ENCODE measurements at regions of chr3 and their contacts with region 1.

Region 1: DNA sequence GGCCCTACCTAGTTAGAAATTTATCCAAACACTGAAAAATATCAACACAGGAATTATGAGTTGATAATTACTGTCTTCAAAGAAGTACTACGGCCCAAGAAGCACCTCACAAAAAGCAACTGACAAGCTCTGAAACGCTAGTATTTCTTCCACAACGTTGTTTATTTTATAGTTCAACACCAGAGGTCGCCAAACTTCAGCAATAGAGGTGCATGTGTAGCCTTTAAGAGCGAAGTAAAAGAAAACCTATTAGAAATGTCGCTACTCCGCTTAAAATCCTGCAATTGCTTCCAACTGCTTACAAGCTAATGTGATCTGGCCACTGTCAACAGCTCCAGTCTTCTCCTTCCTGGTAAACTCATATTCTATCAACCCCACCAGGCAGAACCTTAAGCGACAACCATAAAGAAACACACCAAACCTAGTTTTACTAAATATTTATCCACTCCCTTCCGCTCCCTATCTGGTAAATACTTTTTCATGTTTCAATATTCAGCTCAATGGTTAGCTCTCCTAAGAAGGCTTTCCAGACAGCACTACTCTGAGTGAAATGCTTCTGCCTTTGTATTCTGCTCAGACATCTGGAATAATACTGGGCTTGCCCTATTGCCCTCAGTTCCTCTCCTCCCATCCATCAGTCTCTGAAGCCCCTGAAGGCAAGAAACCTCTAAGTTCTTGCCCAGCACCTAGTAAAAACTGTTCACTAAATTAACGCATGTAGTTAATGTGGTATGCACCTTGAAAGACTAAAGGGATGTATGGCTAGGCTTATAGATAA is 110.2 kb downstream of the NR1I2 start:
- DNase-seq: peak; percentile 26
- H3K4me3 Mint-ChIP-seq: no peak overlapping the region
- H3K27ac Mint-ChIP-seq: no peak overlapping the region
- H3K4me1 Mint-ChIP-seq: peaks cover 4% of the 10 kb centered on the region
- H3K27me3 Mint-ChIP-seq: no peaks in the 10 kb centered on the region

Region 2: DNA sequence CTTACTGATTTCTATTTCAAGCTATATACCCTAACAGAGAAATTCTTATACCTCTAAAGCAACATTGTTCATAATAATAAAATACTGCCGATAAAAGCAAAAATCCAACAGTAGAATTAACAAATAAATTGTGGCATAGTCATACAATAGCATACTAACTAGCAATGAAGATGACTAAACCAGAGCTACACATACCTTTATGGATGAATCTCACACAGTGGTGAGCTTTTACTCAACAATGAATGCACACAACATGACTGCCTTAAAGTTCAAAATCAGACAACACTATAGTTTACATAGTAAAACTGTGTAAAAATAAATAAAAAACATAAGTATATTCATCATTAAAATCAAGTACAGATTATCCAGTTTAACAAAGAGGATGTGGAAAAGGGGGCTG is 11.2 kb before region 1 on chr3:
- CTCF ChIA-PET with region 1: interaction called, 12 read pairs
- POLR2A ChIA-PET with region 1: no interaction called
- DNase-seq: no peak
- H3K4me3 Mint-ChIP-seq: no peak overlapping the region
- H3K27ac Mint-ChIP-seq: no peak overlapping the region
- H3K4me1 Mint-ChIP-seq: no peaks in the 10 kb centered on the region
- H3K27me3 Mint-ChIP-seq: no peaks in the 10 kb centered on the region

Region 3: GRCh38 chr3:120147072-120147871 is 255.1 kb after region 1 on chr3:
- CTCF ChIA-PET with region 1: interaction called, 17 read pairs
- POLR2A ChIA-PET with region 1: interaction called, 3 read pairs
- DNase-seq: peak; percentile 27
- H3K4me3 Mint-ChIP-seq: no peak overlapping the region
- H3K27ac Mint-ChIP-seq: no peak overlapping the region
- H3K4me1 Mint-ChIP-seq: peaks cover 5% of the 10 kb centered on the region
- H3K27me3 Mint-ChIP-seq: no peaks in the 10 kb centered on the region